WTC11 (cell line): ENCODE measurements at regions of chr19 and their contacts with region 1.

Region 1: GRCh38 chr19:6218491-6219162 is 61.1 kb downstream of the MLLT1 start:
- DNase-seq: peak; percentile 97
- ATAC-seq: peak; percentile 82
- H3K4me3 Mint-ChIP-seq: no peak overlapping the region
- H3K27ac Mint-ChIP-seq: 0 out of 2 replicates have a peak overlapping the region, but pooled peaks have one; percentile 24
- H3K4me1 Mint-ChIP-seq: peaks cover 3% of the 10 kb centered on the region; the same call in 1 of the 2 replicates
- H3K27me3 Mint-ChIP-seq: no peaks in the 10 kb centered on the region
- CTCF ChIP-seq: peak; percentile 99

Region 2: GRCh38 chr19:6204212-6204611 is 14.4 kb before region 1 on chr19:
- CTCF ChIA-PET with region 1: interaction called, 20 read pairs
- POLR2A ChIA-PET with region 1: no interaction called
- DNase-seq: no peak
- ATAC-seq: no peak
- H3K4me3 Mint-ChIP-seq: no peak overlapping the region
- H3K27ac Mint-ChIP-seq: no peak overlapping the region
- H3K4me1 Mint-ChIP-seq: peaks cover 2% of the 10 kb centered on the region
- H3K27me3 Mint-ChIP-seq: peaks cover 15% of the 10 kb centered on the region
- CTCF ChIP-seq: no peak

Region 3: GRCh38 chr19:6238643-6239281 is 20.1 kb after region 1 on chr19:
- CTCF ChIA-PET with region 1: interaction called, 20 read pairs
- POLR2A ChIA-PET with region 1: no interaction called
- DNase-seq: no peak
- ATAC-seq: no peak
- H3K4me3 Mint-ChIP-seq: no peak overlapping the region
- H3K27ac Mint-ChIP-seq: peak overlapping the region; percentile 69; the same call in 1 of the 2 replicates
- H3K4me1 Mint-ChIP-seq: peaks cover 25% of the 10 kb centered on the region
- H3K27me3 Mint-ChIP-seq: no peaks in the 10 kb centered on the region
- CTCF ChIP-seq: no peak

Region 4: DNA sequence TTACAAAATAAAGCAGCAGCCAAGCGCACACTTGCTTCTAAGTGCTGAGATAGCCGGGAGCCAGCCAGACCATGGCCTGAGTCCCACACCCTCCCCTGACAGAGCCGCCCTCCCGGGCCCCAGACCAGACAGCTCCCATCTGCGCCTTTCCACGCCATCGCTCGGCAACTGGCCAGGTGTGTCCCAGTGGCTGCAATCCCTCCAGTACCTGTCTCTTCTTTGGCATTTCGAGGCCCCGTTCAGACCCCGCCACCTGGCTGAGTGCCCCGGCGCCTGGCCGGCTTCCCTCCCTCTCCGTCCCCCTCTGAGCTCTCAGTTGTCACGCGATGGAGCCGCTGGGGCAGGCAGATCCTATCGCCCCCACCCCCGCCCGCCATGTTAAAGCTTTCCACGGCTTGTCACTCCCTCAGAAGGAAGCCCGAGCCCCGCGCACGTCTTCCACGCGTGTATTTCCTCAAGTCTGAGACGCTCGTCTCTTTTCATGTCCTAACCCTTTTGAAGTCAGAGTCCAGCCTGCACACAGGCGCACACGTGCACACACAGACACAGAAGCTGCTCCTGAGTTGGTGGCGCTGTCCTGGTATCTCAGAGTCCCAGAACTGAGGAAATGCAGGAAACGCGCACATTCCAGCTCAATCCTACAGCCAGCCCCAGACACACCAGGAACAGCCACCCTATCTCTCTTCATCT is 53.2 kb after region 1 on chr19:
- CTCF ChIA-PET with region 1: interaction called, 39 read pairs
- POLR2A ChIA-PET with region 1: no interaction called
- DNase-seq: peak; percentile 24
- ATAC-seq: peak; percentile 25
- H3K4me3 Mint-ChIP-seq: peak overlapping the region; percentile 19
- H3K27ac Mint-ChIP-seq: peak overlapping the region; percentile 98
- H3K4me1 Mint-ChIP-seq: peaks cover 57% of the 10 kb centered on the region
- H3K27me3 Mint-ChIP-seq: no peaks in the 10 kb centered on the region
- CTCF ChIP-seq: no peak

Region 5: GRCh38 chr19:6340493-6341201 is 122.0 kb after region 1 on chr19:
- CTCF ChIA-PET with region 1: interaction called, 13 read pairs
- POLR2A ChIA-PET with region 1: no interaction called
- DNase-seq: no peak
- ATAC-seq: peak; percentile 51; the same call in 1 of the 2 replicates
- H3K4me3 Mint-ChIP-seq: no peak overlapping the region
- H3K27ac Mint-ChIP-seq: no peak overlapping the region
- H3K4me1 Mint-ChIP-seq: no peaks in the 10 kb centered on the region
- H3K27me3 Mint-ChIP-seq: peaks cover 7% of the 10 kb centered on the region
- CTCF ChIP-seq: no peak